Dendritic cell treated with granulocyte-macrophage colony-stimulating factor and Interleukin-4, amounts not matched to agents 40 ng/mL and 50 ng/mL, for 4 days (primary cell): ENCODE measurements at regions of chr9 and their contacts with region 1.

Region 1: DNA sequence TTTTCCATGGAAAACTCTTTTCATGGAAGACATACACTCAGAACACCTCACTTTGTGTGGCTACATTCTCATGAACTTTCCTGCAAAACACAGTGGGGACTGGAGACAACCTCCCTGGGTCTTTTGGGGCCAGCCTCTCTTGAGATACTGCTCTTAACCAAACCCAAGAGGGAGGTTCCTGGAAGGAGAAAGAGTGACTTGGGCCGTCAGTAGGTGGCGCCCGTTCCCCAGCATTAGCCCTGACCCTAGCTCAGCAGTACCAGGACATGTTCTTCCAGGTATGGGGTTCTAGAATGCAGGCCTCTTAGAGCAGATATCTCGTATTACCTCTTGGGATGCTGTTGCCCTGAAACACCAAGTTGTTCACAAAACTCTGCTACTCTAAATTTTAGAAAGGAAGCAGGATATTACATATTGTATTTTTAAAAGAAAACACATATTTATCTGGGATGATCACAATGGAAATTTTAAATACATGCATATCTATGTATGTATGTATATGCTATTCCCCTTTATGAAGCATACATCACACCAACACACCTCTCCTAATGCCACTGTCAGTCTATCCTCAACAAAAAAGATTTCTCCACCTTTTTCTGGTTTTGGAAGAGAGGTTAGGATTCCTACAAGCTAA is 15.8 kb upstream of the GLIS3 start:
- H3K4me3 Mint-ChIP-seq: no peak overlapping the region
- H3K27ac Mint-ChIP-seq: no peak overlapping the region
- H3K4me1 Mint-ChIP-seq: no peaks in the 10 kb centered on the region
- H3K27me3 Mint-ChIP-seq: peaks cover 4% of the 10 kb centered on the region

Region 2: GRCh38 chr9:4297151-4297785 is 18.4 kb before region 1 on chr9:
- intact Hi-C with region 1: loop called (anchors 1 kb)
- H3K4me3 Mint-ChIP-seq: peak overlapping the region; percentile 98
- H3K27ac Mint-ChIP-seq: peak overlapping the region; percentile 86
- H3K4me1 Mint-ChIP-seq: peaks cover 39% of the 10 kb centered on the region
- H3K27me3 Mint-ChIP-seq: peaks cover 43% of the 10 kb centered on the region

Region 3: GRCh38 chr9:4366591-4367330 is 51.1 kb after region 1 on chr9:
- intact Hi-C with region 1: loop called (anchors 5 kb)
- H3K4me3 Mint-ChIP-seq: no peak overlapping the region
- H3K27ac Mint-ChIP-seq: no peak overlapping the region
- H3K4me1 Mint-ChIP-seq: no peaks in the 10 kb centered on the region
- H3K27me3 Mint-ChIP-seq: no peaks in the 10 kb centered on the region